ENCODE measurements at regions of chr3 and their contacts with region 1.

Region 1: GRCh38 chr3:187738331-187739093 is 6.8 kb downstream of the BCL6 start:
- DNase-seq: peak; percentile 92 to 98 (median 94)
- H3K4me3 ChIP-seq: peak overlapping the region in 3 of 4 donors; percentile 26 to 82 (median 29)
- H3K27ac ChIP-seq: peak overlapping the region; percentile 98 to 100 (median 99)
- H3K4me1 ChIP-seq: peaks cover 44 to 45% of the 10 kb centered on the region in 2 donors
- H3K27me3 ChIP-seq: no peaks in the 10 kb centered on the region
- CTCF ChIP-seq: peak; percentile 33 to 89 (median 74)
- POLR2A ChIP-seq: peak; percentile 7 to 78

Region 2: GRCh38 chr3:187291512-187292132 is 446.9 kb before region 1 on chr3 and contains the start of gene MASP1:
- intact Hi-C with region 1: no loop called
- DNase-seq: peak in 3 of 7 donors; percentile 27 to 41 (median 36)
- H3K4me3 ChIP-seq: peak within 1 kb of the TSS in 1 of 4 donors; percentile 17
- H3K27ac ChIP-seq: no peak within 1 kb of the TSS
- H3K4me1 ChIP-seq: peaks cover 0 to 15% of the 10 kb centered on the region in 2 donors
- H3K27me3 ChIP-seq: no peaks in the 10 kb centered on the region
- CTCF ChIP-seq: no peak
- POLR2A ChIP-seq: no peak
- total RNA-seq, gene MASP1: 0.94 to 19.5 (median 5.3) TPM

Region 3: GRCh38 chr3:188954590-188955208 is 1216.2 kb after region 1 on chr3:
- intact Hi-C with region 1: loop called (anchors 5 kb)
- DNase-seq: peak; percentile 79 to 92 (median 87)
- H3K4me3 ChIP-seq: no peak overlapping the region
- H3K27ac ChIP-seq: no peak overlapping the region
- H3K4me1 ChIP-seq: peaks cover 17 to 18% of the 10 kb centered on the region in 2 donors
- H3K27me3 ChIP-seq: no peaks in the 10 kb centered on the region
- CTCF ChIP-seq: peak; percentile 91 to 98 (median 98)
- POLR2A ChIP-seq: no peak

Region 4: DNA sequence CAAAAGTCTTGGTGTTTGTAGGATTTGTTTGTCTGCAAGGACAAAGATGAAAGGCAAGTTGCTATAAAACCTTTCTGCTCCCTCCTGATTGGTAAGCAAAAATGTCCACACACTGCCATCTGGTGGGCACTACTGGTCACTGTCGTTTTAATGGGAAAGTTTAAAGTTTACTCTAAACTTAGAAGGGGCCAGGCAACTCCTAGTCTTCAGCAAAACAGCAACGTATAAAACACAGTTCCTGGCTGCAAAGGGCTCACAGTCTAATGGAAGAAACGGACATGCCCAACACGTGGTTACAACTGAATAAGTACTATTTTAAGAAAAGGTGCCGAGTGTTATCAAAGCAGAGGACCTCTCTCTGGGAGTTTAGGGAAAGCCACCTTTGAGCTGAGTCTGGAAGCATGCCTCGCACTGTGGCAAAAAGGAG is 1409.6 kb after region 1 on chr3:
- intact Hi-C with region 1: loop called in 1 of 2 experiments (anchors 10 kb)
- DNase-seq: peak; percentile 60 to 88 (median 67)
- H3K4me3 ChIP-seq: no peak overlapping the region
- H3K27ac ChIP-seq: peak overlapping the region in 1 of 5 donors; percentile 25
- H3K4me1 ChIP-seq: peaks cover 7 to 11% of the 10 kb centered on the region in 2 donors
- H3K27me3 ChIP-seq: no peaks in the 10 kb centered on the region
- CTCF ChIP-seq: peak; percentile 83 to 89 (median 85)
- POLR2A ChIP-seq: no peak